Spleen (tissue), 13 donors: ENCODE measurements at regions of chrX and their contacts with region 1.

Region 1: GRCh38 chrX:10119399-10119990 is 37.3 kb upstream of the CLCN4 start:
- DNase-seq: peak; percentile 85
- H3K4me3 ChIP-seq: no peak overlapping the region
- H3K27ac ChIP-seq: peak overlapping the region in 5 of 8 donors; percentile 18 to 49 (median 45)
- H3K4me1 ChIP-seq: peaks cover 4 to 80% (median 42%) of the 10 kb centered on the region in 6 donors
- H3K27me3 ChIP-seq: no peaks in the 10 kb centered on the region
- CTCF ChIP-seq: peak; percentile 97 to 100 (median 100)
- POLR2A ChIP-seq: no peak

Region 2: GRCh38 chrX:9885150-9885549 is 234.3 kb before region 1 on chrX:
- intact Hi-C with region 1: loop called (anchors 10 kb)
- DNase-seq: peak; percentile 89
- H3K4me3 ChIP-seq: no peak overlapping the region
- H3K27ac ChIP-seq: no peak overlapping the region
- H3K4me1 ChIP-seq: peaks cover 0 to 7% (median 0%) of the 10 kb centered on the region in 6 donors
- H3K27me3 ChIP-seq: peaks cover 0 to 20% (median 0%) of the 10 kb centered on the region in 7 donors
- CTCF ChIP-seq: peak; percentile 6 to 70 (median 55)
- POLR2A ChIP-seq: no peak

Region 3: GRCh38 chrX:9980927-9981326 is 138.6 kb before region 1 on chrX:
- intact Hi-C with region 1: no loop called
- DNase-seq: no peak
- H3K4me3 ChIP-seq: peak overlapping the region in 1 of 8 donors; percentile 41
- H3K27ac ChIP-seq: peak overlapping the region in 7 of 8 donors; percentile 74 to 91 (median 83)
- H3K4me1 ChIP-seq: peaks cover 0 to 30% (median 5%) of the 10 kb centered on the region in 6 donors
- H3K27me3 ChIP-seq: no peaks in the 10 kb centered on the region
- CTCF ChIP-seq: no peak
- POLR2A ChIP-seq: no peak

Region 4: GRCh38 chrX:9995855-9996339 is 123.6 kb before region 1 on chrX:
- intact Hi-C with region 1: loop called (anchors 2 kb)
- DNase-seq: peak; percentile 93
- H3K4me3 ChIP-seq: no peak overlapping the region
- H3K27ac ChIP-seq: no peak overlapping the region
- H3K4me1 ChIP-seq: peaks cover 0 to 8% (median 0%) of the 10 kb centered on the region in 6 donors
- H3K27me3 ChIP-seq: no peaks in the 10 kb centered on the region
- CTCF ChIP-seq: peak; percentile 76 to 98 (median 90)
- POLR2A ChIP-seq: no peak